ENCODE measurements at regions of chr17 and their contacts with region 1.

Region 1: DNA sequence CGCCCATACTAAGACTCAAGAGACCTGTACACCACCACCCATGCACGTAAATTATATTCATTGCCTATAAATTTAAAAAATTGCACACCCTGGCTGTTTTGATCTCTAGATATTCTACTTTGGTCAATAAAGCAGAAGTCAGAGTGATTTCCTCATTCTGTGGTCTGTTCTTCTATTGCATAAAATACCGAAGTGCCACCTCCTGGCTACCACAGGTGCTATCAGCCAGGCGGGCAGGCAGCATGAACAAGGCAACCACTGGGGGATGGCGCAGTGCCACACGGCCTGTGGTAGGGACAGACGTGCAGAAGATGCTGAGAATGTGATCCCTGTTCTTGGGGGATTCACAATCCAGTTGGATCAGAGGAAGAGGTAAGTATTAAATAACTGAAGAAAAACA is 122.3 kb downstream of the CDK5R1 start:
- DNase-seq: no peak
- ATAC-seq: no peak
- H3K4me3 ChIP-seq: no peak overlapping the region
- H3K27ac ChIP-seq: no peak overlapping the region
- H3K4me1 ChIP-seq: no peaks in the 10 kb centered on the region
- H3K27me3 ChIP-seq: no peaks in the 10 kb centered on the region
- CTCF ChIP-seq: no peak
- POLR2A ChIP-seq: no peak
- RAD21 ChIP-seq: no peak

Region 2: DNA sequence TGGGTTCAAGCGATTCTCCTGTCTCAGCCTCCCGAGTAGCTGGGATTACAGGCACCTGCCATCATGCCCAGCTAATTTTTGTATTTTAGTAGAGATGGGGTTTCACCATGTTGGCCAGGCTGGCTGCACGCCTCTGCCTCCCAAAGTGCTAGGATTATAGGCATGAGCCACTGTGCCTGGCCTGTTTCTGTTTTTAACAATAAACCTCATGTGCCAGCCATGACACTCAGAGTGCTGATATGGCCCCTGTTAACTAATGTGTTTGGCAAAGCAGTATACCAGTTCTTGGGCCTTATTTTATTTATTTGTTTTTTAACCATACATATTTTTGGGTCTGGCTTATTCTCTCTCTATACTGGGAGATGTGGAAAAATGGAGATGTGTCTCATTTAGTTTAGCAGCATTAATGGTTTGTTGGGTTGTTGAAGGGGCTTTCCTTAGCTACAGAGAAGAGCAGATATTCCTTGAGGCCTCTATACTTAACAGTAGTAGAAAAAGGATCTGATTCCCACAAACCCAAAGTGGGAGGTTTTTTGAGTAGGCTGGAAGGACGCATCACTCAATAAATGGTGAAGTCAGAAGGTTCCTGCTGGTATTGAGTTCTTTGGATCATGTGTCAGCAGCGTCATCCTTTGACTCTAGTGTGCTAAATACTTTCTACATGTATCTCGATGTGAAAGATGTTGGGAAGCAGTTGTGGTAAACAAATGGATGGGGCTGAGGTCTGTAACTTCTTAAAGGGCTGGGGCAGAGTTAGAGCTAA is 138.5 kb before region 1 on chr17:
- CTCF ChIA-PET with region 1: no interaction called
- POLR2A ChIA-PET with region 1: interaction called, 10 read pairs
- dilution Hi-C with region 1: no loop called
- in situ Hi-C with region 1: no loop called
- intact Hi-C with region 1: no loop called
- DNase-seq: no peak
- ATAC-seq: no peak
- H3K4me3 ChIP-seq: no peak overlapping the region
- H3K27ac ChIP-seq: no peak overlapping the region
- H3K4me1 ChIP-seq: no peaks in the 10 kb centered on the region
- H3K27me3 ChIP-seq: no peaks in the 10 kb centered on the region
- CTCF ChIP-seq: no peak
- POLR2A ChIP-seq: no peak
- RAD21 ChIP-seq: no peak

Region 3: GRCh38 chr17:32558997-32559650 is 50.0 kb before region 1 on chr17:
- CTCF ChIA-PET with region 1: no interaction called
- POLR2A ChIA-PET with region 1: no interaction called
- dilution Hi-C with region 1: no loop called
- in situ Hi-C with region 1: no loop called
- intact Hi-C with region 1: loop called (anchors 5 kb)
- DNase-seq: no peak
- ATAC-seq: no peak
- H3K4me3 ChIP-seq: no peak overlapping the region
- H3K27ac ChIP-seq: no peak overlapping the region
- H3K4me1 ChIP-seq: no peaks in the 10 kb centered on the region
- H3K27me3 ChIP-seq: no peaks in the 10 kb centered on the region
- CTCF ChIP-seq: no peak
- POLR2A ChIP-seq: no peak
- RAD21 ChIP-seq: no peak

Measured in IMR-90 (cell line).